ENCODE measurements at regions of chr4 and their contacts with region 1.

Region 1: DNA sequence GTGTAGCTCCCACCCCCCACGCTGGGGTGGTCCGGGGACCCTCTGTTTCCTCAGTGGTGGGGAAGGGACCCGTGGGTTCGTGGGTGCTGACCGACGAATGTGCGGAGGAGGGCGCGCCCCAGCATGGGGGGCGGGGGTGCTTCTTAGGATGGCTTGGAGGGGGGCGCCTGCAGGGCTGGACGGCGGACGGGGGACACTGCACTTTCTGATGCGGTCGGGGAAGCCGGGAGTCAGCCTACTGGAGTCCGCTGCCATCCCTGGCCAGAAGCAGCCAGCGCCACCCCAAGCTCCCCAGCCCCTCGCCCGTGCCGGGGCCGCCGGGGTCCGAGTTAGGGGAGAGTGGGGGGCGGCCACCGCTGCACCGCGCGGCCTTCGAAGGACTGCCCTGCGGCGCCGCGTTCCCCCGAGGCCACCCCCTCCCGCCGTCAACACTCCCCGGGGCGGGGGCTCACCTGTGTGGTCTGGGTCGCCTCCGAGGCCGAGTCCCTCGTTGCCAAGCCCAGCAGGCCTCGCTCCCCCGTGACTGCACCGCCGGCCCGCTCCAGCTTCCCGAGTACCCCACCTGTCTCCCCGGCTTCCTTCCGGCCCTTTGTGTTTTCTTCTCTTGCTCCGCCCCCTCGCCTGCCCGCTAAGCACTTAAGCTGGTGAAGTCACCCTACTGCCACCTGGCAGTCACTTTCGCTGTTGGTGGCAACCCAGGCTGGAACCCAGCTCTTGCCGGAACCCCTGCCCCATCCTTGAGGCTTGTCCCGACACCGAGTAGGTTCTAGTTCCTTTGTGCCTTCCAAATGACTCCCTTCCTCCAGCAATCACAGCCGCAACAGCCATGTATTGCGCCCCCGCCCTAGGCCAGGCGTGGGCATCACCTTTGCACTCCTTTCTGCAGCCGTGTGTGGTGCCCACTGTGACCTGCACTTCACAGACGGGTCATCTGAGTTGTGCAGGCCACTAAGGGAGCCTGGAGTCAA is at the start of gene OCIAD2:
- DNase-seq: peak; percentile 80 to 89 (median 82)
- H3K4me3 ChIP-seq: peak within 1 kb of the TSS; percentile 70 to 77
- H3K4me3 Mint-ChIP-seq: peak within 1 kb of the TSS; percentile 92 to 98 (median 93)
- H3K27ac ChIP-seq: peak within 1 kb of the TSS; percentile 59
- H3K27ac Mint-ChIP-seq: peak within 1 kb of the TSS; percentile 83 to 97 (median 94)
- H3K4me1 ChIP-seq: peaks cover 39% of the 10 kb centered on the region
- H3K4me1 Mint-ChIP-seq: peaks cover 31 to 55% (median 38%) of the 10 kb centered on the region in 4 donors
- H3K27me3 ChIP-seq: no peaks in the 10 kb centered on the region
- H3K27me3 Mint-ChIP-seq: no peaks in the 10 kb centered on the region
- total RNA-seq, gene OCIAD2: 102 to 108 TPM

Region 2: GRCh38 chr4:48269861-48270522 is 636.5 kb before region 1 on chr4:
- CTCF ChIA-PET with region 1: no interaction called
- POLR2A ChIA-PET with region 1: no interaction called
- intact Hi-C with region 1: loop called (anchors 10 kb)
- DNase-seq: peak; percentile 74 to 86 (median 77)
- H3K4me3 ChIP-seq: peak overlapping the region; percentile 50 to 59
- H3K4me3 Mint-ChIP-seq: peak overlapping the region; percentile 91 to 98 (median 96)
- H3K27ac ChIP-seq: peak overlapping the region; percentile 48
- H3K27ac Mint-ChIP-seq: peak overlapping the region; percentile 82 to 93 (median 90)
- H3K4me1 ChIP-seq: peaks cover 14% of the 10 kb centered on the region
- H3K4me1 Mint-ChIP-seq: peaks cover 9 to 24% (median 10%) of the 10 kb centered on the region in 4 donors
- H3K27me3 ChIP-seq: no peaks in the 10 kb centered on the region
- H3K27me3 Mint-ChIP-seq: no peaks in the 10 kb centered on the region

Region 3: GRCh38 chr4:48830706-48831531 is 75.6 kb before region 1 on chr4 and contains the start of gene OCIAD1:
- CTCF ChIA-PET with region 1: no interaction called
- POLR2A ChIA-PET with region 1: no interaction called
- intact Hi-C with region 1: loop called (anchors 1 kb)
- DNase-seq: peak; percentile 91 to 99 (median 96)
- H3K4me3 ChIP-seq: peak within 1 kb of the TSS; percentile 92 to 100
- H3K4me3 Mint-ChIP-seq: peak within 1 kb of the TSS; percentile 100
- H3K27ac ChIP-seq: peak within 1 kb of the TSS; percentile 98
- H3K27ac Mint-ChIP-seq: peak within 1 kb of the TSS; percentile 99 to 100 (median 100)
- H3K4me1 ChIP-seq: peaks cover 25% of the 10 kb centered on the region
- H3K4me1 Mint-ChIP-seq: peaks cover 15 to 35% (median 28%) of the 10 kb centered on the region in 4 donors
- H3K27me3 ChIP-seq: no peaks in the 10 kb centered on the region
- H3K27me3 Mint-ChIP-seq: no peaks in the 10 kb centered on the region
- total RNA-seq, gene OCIAD1: 110 to 124 TPM

Region 4: GRCh38 chr4:48877827-48878533 is 28.5 kb before region 1 on chr4:
- CTCF ChIA-PET with region 1: no interaction called
- POLR2A ChIA-PET with region 1: no interaction called
- intact Hi-C with region 1: no loop called
- DNase-seq: no peak
- H3K4me3 ChIP-seq: no peak overlapping the region
- H3K4me3 Mint-ChIP-seq: no peak overlapping the region
- H3K27ac ChIP-seq: no peak overlapping the region
- H3K27ac Mint-ChIP-seq: peak overlapping the region in 1 of 7 donors; percentile 73
- H3K4me1 ChIP-seq: no peaks in the 10 kb centered on the region
- H3K4me1 Mint-ChIP-seq: no peaks in the 10 kb centered on the region
- H3K27me3 ChIP-seq: no peaks in the 10 kb centered on the region
- H3K27me3 Mint-ChIP-seq: no peaks in the 10 kb centered on the region

Region 5: DNA sequence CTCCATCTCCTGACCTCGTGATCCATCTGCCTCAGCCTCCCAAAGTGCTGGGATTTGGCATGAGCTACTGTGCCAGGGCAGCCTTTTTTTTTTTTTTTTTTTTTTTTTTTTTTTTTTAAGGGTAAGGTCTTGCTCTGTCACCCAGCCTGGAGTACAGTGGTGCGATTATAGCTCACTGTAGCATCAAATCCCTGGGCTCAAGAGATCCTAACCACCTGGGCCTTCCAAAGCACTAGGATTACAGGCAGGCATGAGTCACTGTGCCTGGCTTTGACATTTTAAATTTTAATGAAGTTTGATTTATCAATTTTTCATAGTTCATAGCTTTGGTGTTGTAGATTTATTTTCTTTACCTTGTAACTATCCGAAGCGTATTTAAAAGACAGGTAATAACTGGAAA is 17.9 kb after region 1 on chr4:
- CTCF ChIA-PET with region 1: interaction called, 7 read pairs
- POLR2A ChIA-PET with region 1: interaction called, 9 read pairs
- intact Hi-C with region 1: loop called (anchors 1 kb)
- DNase-seq: no peak
- H3K4me3 ChIP-seq: no peak overlapping the region
- H3K4me3 Mint-ChIP-seq: no peak overlapping the region
- H3K27ac ChIP-seq: no peak overlapping the region
- H3K27ac Mint-ChIP-seq: no peak overlapping the region
- H3K4me1 ChIP-seq: no peaks in the 10 kb centered on the region
- H3K4me1 Mint-ChIP-seq: peaks cover 0 to 17% (median 3%) of the 10 kb centered on the region in 4 donors
- H3K27me3 ChIP-seq: no peaks in the 10 kb centered on the region
- H3K27me3 Mint-ChIP-seq: no peaks in the 10 kb centered on the region

Region 6: GRCh38 chr4:48931459-48931858 is 25.0 kb after region 1 on chr4:
- CTCF ChIA-PET with region 1: interaction called, 10 read pairs
- POLR2A ChIA-PET with region 1: no interaction called
- intact Hi-C with region 1: no loop called
- DNase-seq: no peak
- H3K4me3 ChIP-seq: no peak overlapping the region
- H3K4me3 Mint-ChIP-seq: no peak overlapping the region
- H3K27ac ChIP-seq: no peak overlapping the region
- H3K27ac Mint-ChIP-seq: no peak overlapping the region
- H3K4me1 ChIP-seq: no peaks in the 10 kb centered on the region
- H3K4me1 Mint-ChIP-seq: peaks cover 0 to 3% (median 0%) of the 10 kb centered on the region in 4 donors
- H3K27me3 ChIP-seq: no peaks in the 10 kb centered on the region
- H3K27me3 Mint-ChIP-seq: no peaks in the 10 kb centered on the region

Region 7: DNA sequence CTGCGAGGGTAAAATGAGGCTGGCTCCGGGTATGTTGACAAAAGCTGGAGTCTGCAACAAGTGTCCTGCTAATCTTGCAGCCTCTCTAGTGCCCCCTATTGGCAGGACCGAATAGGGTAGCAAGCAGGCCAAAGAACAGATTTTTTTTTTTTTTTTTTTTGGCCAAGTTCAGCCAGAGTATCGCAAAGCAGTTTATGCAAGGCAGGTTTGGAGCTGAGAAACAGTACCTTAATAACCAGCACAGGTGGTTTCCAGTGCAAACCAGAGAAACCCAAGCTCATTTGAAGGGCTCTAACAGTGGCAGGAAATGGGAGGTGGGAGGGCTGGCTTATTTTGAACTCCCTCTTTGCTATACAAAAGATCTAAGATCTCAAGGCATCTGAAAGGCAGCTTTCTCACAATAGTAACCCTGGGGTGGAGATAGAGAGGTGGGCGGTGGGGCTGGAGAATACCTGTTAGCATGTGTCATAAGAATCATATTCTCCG is 38.3 kb after region 1 on chr4:
- CTCF ChIA-PET with region 1: interaction called, 9 read pairs
- POLR2A ChIA-PET with region 1: interaction called, 10 read pairs
- intact Hi-C with region 1: no loop called
- DNase-seq: peak in 4 of 5 donors; percentile 16 to 28 (median 18)
- H3K4me3 ChIP-seq: no peak overlapping the region
- H3K4me3 Mint-ChIP-seq: peak overlapping the region in 4 of 8 donors; percentile 30 to 72 (median 48)
- H3K27ac ChIP-seq: no peak overlapping the region
- H3K27ac Mint-ChIP-seq: peak overlapping the region in 4 of 7 donors; percentile 23 to 32 (median 27)
- H3K4me1 ChIP-seq: peaks cover 12% of the 10 kb centered on the region
- H3K4me1 Mint-ChIP-seq: peaks cover 7 to 13% (median 10%) of the 10 kb centered on the region in 4 donors
- H3K27me3 ChIP-seq: no peaks in the 10 kb centered on the region
- H3K27me3 Mint-ChIP-seq: no peaks in the 10 kb centered on the region

Region 8: GRCh38 chr4:48963042-48963679 is 56.7 kb after region 1 on chr4:
- CTCF ChIA-PET with region 1: interaction called, 10 read pairs
- POLR2A ChIA-PET with region 1: interaction called, 5 read pairs
- intact Hi-C with region 1: loop called (anchors 1 kb)
- DNase-seq: peak; percentile 75 to 79 (median 76)
- H3K4me3 ChIP-seq: no peak overlapping the region
- H3K4me3 Mint-ChIP-seq: no peak overlapping the region
- H3K27ac ChIP-seq: no peak overlapping the region
- H3K27ac Mint-ChIP-seq: no peak overlapping the region
- H3K4me1 ChIP-seq: no peaks in the 10 kb centered on the region
- H3K4me1 Mint-ChIP-seq: no peaks in the 10 kb centered on the region
- H3K27me3 ChIP-seq: no peaks in the 10 kb centered on the region
- H3K27me3 Mint-ChIP-seq: peaks cover 1 to 4% of the 10 kb centered on the region in 2 donors

Measured in CD4-positive, alpha-beta memory T cell (primary cell).